ENCODE measurements at regions of chrX and their contacts with region 1.

Region 1: DNA sequence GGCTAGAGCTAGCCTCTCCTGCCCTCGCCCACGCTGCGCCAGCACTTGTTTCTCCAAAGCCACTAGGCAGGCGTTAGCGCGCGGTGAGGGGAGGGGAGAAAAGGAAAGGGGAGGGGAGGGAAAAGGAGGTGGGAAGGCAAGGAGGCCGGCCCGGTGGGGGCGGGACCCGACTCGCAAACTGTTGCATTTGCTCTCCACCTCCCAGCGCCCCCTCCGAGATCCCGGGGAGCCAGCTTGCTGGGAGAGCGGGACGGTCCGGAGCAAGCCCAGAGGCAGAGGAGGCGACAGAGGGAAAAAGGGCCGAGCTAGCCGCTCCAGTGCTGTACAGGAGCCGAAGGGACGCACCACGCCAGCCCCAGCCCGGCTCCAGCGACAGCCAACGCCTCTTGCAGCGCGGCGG is at the start of gene AR:
- DNase-seq: peak; percentile 84 to 90
- ATAC-seq: peak; percentile 83
- H3K4me3 ChIP-seq: peak within 1 kb of the TSS; percentile 52 to 68
- H3K27ac ChIP-seq: peak within 1 kb of the TSS in 1 of 2 donors; percentile 65
- H3K4me1 ChIP-seq: no peaks in the 10 kb centered on the region
- H3K27me3 ChIP-seq: no peaks in the 10 kb centered on the region
- total RNA-seq, gene AR: 12.8 to 17.9 TPM

Region 2: GRCh38 chrX:67724359-67725110 is 180.7 kb after region 1 on chrX:
- intact Hi-C with region 1: loop called in 1 of 2 experiments (anchors 10 kb)
- DNase-seq: no peak
- ATAC-seq: no peak
- H3K4me3 ChIP-seq: no peak overlapping the region
- H3K27ac ChIP-seq: no peak overlapping the region
- H3K4me1 ChIP-seq: no peaks in the 10 kb centered on the region
- H3K27me3 ChIP-seq: no peaks in the 10 kb centered on the region

Region 3: GRCh38 chrX:67780694-67781109 is 236.9 kb after region 1 on chrX:
- intact Hi-C with region 1: loop called in 1 of 2 experiments (anchors 5 kb)
- DNase-seq: peak; percentile 86 to 93
- ATAC-seq: peak; percentile 86
- H3K4me3 ChIP-seq: no peak overlapping the region
- H3K27ac ChIP-seq: peak overlapping the region; percentile 49 to 67
- H3K4me1 ChIP-seq: no peaks in the 10 kb centered on the region
- H3K27me3 ChIP-seq: no peaks in the 10 kb centered on the region